Calu3 (cell line): ENCODE measurements at regions of chr3 and their contacts with region 1.

Region 1: GRCh38 chr3:157532529-157533297 is 29.5 kb upstream of the VEPH1 start:
- DNase-seq: peak; percentile 74
- H3K4me3 Mint-ChIP-seq: no peak overlapping the region
- H3K27ac Mint-ChIP-seq: no peak overlapping the region
- H3K4me1 Mint-ChIP-seq: no peaks in the 10 kb centered on the region
- H3K27me3 Mint-ChIP-seq: no peaks in the 10 kb centered on the region
- CTCF ChIP-seq: peak; percentile 94

Region 2: DNA sequence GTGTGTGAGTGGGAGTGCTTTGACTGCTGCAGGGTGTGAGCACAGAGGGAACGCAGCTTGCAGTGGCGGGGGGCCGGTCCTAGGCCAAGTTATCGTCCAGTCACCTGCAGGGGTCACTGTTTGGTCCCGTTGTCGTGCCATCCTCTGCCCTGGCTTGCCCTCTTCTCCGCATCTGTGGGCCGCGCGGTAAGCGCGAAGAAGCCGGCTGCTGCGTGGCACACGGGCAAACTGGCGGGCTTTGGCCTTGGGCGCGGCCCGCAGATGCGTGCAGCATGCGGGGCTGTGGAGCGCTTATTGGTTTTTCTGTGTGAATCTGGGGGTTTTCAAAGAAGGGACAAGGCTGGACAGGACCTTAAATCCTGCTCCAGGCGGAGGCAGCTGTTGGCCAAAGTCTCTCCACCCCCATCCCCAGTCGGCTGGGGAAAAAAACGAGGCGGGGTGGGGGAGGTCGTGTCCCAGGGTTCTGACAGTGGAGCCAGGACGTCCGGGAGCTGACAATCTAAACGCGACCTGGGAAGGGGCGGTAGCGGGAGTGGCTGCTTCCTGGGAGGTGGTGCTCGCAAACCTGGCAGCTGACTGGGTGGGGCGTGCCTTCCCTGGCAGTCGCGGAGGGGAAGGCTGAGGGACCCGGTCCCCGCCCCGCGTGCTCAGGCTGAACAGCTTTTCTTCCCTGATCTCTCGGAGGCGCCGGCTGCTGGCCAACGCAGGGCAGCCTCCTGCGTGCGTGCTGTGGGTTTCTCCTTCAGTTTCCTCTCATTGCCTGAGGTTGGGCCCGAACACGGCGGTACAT is 10.2 kb after region 1 on chr3:
- CTCF ChIA-PET with region 1: interaction called, 27 read pairs
- intact Hi-C with region 1: no loop called
- DNase-seq: peak; percentile 90
- H3K4me3 Mint-ChIP-seq: peak overlapping the region; percentile 82
- H3K27ac Mint-ChIP-seq: peak overlapping the region; percentile 39
- H3K4me1 Mint-ChIP-seq: peaks cover 12% of the 10 kb centered on the region
- H3K27me3 Mint-ChIP-seq: no peaks in the 10 kb centered on the region
- CTCF ChIP-seq: peak; percentile 24

Region 3: DNA sequence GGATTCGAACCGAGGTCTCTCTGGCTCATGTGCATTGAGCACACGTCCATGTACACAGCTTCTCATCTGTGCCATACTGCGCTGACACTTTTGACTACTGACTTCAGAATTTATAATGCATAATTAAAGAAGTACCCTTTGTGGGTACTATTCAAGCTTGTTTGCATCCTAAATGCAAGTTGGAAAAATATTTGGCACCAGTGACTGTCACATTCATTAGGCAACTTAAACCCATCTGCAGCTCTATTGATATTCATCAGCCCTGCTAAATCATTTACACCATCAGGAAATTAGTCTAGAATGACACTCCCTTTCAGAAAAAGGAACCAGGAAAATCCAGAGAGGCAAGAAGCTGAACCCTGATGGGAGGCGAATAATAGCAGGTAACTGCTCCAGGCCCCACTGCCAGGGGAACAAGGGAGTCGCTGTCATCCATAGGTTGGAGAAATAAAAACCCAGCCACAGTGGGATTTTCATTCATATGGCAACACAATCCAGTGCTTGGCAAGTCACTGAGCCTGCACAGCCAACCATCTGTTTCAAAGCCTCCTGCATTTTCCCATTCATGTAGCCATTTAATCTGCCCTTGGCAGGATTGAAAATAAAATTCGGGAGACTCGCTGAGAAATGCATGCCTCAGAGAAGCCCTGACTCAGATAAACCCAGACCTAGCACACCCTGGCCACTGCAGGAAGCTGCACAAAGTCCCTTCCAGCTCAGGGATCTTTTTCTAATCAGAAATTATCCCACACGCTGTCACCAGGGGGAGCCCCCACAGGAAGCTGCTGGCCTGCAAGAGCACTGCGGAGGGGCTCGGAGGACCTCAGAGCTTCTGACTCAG is 73.5 kb after region 1 on chr3:
- CTCF ChIA-PET with region 1: interaction called, 26 read pairs
- intact Hi-C with region 1: loop called (anchors 1 kb)
- DNase-seq: peak; percentile 95
- H3K4me3 Mint-ChIP-seq: peak overlapping the region; percentile 26
- H3K27ac Mint-ChIP-seq: no peak overlapping the region
- H3K4me1 Mint-ChIP-seq: peaks cover 11% of the 10 kb centered on the region
- H3K27me3 Mint-ChIP-seq: no peaks in the 10 kb centered on the region
- CTCF ChIP-seq: peak; percentile 97

Region 4: GRCh38 chr3:157785102-157785826 is 252.6 kb after region 1 on chr3:
- CTCF ChIA-PET with region 1: no interaction called
- intact Hi-C with region 1: loop called (anchors 10 kb)
- DNase-seq: peak; percentile 78
- H3K4me3 Mint-ChIP-seq: no peak overlapping the region
- H3K27ac Mint-ChIP-seq: no peak overlapping the region
- H3K4me1 Mint-ChIP-seq: peaks cover 31% of the 10 kb centered on the region
- H3K27me3 Mint-ChIP-seq: no peaks in the 10 kb centered on the region
- CTCF ChIP-seq: no peak

Region 5: GRCh38 chr3:158058495-158059130 is 525.9 kb after region 1 on chr3:
- CTCF ChIA-PET with region 1: no interaction called
- intact Hi-C with region 1: loop called (anchors 5 kb)
- DNase-seq: peak; percentile 34
- H3K4me3 Mint-ChIP-seq: peak overlapping the region; percentile 64
- H3K27ac Mint-ChIP-seq: peak overlapping the region; percentile 46
- H3K4me1 Mint-ChIP-seq: peaks cover 12% of the 10 kb centered on the region
- H3K27me3 Mint-ChIP-seq: no peaks in the 10 kb centered on the region
- CTCF ChIP-seq: no peak

Region 6: DNA sequence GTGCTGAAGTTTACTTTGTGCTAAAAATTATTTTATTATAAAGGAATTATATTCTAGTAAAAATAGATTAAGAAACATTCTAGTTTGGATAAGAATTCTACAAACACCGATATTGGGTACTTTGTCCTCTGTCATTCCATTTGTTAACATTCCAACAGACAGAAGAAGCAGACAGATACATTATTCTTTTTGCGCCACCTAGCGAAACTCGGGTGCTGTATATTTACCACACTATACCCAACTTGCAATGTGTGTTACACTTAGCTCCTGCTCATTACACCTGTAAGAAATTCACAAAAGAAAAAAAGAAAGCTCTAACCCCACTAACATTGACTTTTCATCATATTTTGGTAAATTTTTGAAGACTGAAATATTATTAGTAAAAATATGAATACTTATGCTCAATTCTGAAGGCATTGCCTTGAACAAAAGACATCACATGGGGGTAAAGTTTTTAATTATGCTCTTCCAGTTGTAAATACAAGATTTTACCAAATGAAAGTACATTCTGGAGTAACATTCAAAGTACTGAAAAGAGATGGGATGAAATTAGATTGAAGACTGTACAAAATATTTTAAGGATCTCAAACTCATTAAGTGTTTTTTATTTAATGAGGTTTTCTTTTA is 901.8 kb after region 1 on chr3:
- CTCF ChIA-PET with region 1: interaction called, 3 read pairs
- intact Hi-C with region 1: loop called (anchors 2 kb)
- DNase-seq: peak; percentile 81
- H3K4me3 Mint-ChIP-seq: no peak overlapping the region
- H3K27ac Mint-ChIP-seq: no peak overlapping the region
- H3K4me1 Mint-ChIP-seq: peaks cover 19% of the 10 kb centered on the region
- H3K27me3 Mint-ChIP-seq: no peaks in the 10 kb centered on the region
- CTCF ChIP-seq: peak; percentile 90